Panc1 (cell line): ENCODE measurements at regions of chr6 and their contacts with region 1.

Region 1: GRCh38 chr6:17803409-17803808 is 96.7 kb upstream of the NUP153 start:
- DNase-seq: no peak
- ATAC-seq: no peak
- H3K4me3 ChIP-seq: no peak overlapping the region
- H3K27ac ChIP-seq: no peak overlapping the region
- H3K4me1 ChIP-seq: no peaks in the 10 kb centered on the region
- H3K27me3 ChIP-seq: no peaks in the 10 kb centered on the region
- CTCF ChIP-seq: no peak

Region 2: DNA sequence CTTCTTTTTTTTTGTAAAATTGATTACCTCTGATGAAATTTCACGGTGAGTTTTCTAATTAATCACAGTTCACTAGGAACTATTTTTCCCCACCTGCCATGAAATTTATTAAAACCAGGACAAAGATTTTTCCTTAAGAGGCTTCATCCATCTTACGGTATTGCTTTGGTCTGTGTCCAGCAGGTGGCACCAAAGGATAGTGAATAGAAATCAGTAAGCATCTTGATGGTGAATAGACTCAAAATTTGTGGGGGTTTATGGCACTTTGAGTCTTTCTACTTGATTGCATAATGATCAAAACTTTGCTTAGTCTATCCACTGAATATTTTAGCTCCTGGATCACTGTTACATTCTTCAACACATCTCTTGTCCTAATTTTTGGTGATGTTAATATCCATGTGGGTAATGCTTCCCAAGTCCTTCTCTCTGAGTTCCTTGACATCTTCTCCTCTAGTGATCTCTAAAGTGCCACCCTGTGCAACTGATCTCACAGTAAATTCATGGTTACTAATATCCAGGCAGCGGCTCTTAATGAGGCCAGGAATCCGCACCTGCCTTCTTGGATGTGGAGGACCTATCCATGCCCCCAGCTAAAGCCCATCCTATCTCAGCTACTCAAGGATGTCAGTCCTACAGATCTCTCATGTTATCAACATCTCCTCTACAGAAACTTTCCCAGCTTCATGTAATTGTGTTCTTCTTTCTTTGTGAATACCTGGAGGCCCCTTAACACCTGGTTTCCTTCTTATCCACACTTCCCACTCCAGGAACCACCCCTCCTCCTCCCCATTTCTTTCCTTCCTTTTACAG is 647.1 kb before region 1 on chr6:
- CTCF ChIA-PET with region 1: no interaction called
- POLR2A ChIA-PET with region 1: no interaction called
- in situ Hi-C with region 1: no loop called
- intact Hi-C with region 1: loop called (anchors 5 kb)
- DNase-seq: peak; percentile 69
- ATAC-seq: peak; percentile 89
- H3K4me3 ChIP-seq: no peak overlapping the region
- H3K27ac ChIP-seq: no peak overlapping the region
- H3K4me1 ChIP-seq: no peaks in the 10 kb centered on the region
- H3K27me3 ChIP-seq: no peaks in the 10 kb centered on the region
- CTCF ChIP-seq: peak; percentile 72; the same call in 1 of the 2 replicates

Region 3: DNA sequence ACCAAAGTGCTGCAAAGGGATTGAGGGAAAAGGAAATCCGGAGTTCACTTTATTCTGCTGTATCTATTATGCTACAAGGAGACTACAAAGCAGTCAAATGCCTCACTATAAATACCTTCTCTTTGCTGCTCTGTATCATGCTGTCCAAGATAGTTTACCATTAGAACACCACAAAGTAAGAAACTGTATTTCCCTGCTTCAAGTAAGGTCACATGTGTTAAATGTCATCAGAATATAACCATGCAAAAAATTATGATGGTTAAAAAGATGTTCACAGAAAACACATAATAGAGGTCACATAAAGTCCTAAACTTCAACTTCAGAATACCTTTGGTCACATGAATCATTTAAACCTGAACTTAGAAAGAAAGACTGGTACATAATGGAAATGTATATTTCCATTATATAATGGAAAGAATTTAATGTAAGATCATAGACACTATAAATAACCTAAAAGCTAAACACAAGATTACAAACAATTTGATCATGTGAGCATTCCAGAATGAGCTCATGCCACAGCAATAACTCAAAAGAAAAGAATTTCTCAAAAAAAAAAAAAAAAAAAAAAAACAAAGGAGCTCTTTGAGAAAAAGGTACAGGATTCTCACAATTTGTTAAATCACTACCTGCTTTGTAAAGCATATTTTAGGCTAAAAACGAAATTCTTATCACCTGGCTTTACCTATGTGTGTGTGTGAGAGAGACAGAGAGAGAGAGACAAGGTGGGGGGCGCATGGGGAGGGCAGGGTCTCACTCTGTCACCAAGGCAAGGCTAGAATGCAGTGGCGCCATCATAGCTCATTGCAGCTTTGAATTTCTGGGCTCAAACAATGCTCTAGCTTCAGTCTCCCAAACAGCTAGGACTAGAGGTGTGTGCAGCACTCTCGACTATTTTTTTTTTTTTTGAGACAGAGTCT is 125.4 kb after region 1 on chr6:
- CTCF ChIA-PET with region 1: no interaction called
- POLR2A ChIA-PET with region 1: no interaction called
- in situ Hi-C with region 1: no loop called
- intact Hi-C with region 1: no loop called
- DNase-seq: no peak
- ATAC-seq: no peak
- H3K4me3 ChIP-seq: no peak overlapping the region
- H3K27ac ChIP-seq: no peak overlapping the region
- H3K4me1 ChIP-seq: no peaks in the 10 kb centered on the region; the same call in 1 of the 2 replicates
- H3K27me3 ChIP-seq: no peaks in the 10 kb centered on the region
- CTCF ChIP-seq: no peak

Region 4: DNA sequence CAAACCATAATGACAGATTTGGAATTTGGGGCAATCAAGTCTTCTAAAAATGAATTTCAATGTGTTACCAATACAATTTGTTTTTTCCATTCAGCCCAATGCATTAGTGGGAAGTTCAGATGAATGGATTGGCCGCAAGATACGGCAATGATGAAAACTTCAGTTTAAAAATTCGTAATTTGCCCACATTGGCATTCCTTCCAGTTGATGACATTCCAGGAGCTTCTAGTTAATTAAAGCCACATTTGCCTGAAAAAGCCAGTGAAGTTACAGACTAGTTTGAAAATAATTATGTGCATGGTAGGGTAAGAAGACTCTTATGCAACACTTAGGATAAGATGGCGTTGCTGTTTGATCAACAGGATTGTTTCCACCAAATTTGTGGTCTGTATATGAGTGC is 272.8 kb after region 1 on chr6:
- CTCF ChIA-PET with region 1: no interaction called
- POLR2A ChIA-PET with region 1: no interaction called
- in situ Hi-C with region 1: no loop called
- intact Hi-C with region 1: no loop called
- DNase-seq: no peak
- ATAC-seq: no peak
- H3K4me3 ChIP-seq: no peak overlapping the region
- H3K27ac ChIP-seq: no peak overlapping the region
- H3K4me1 ChIP-seq: no peaks in the 10 kb centered on the region
- H3K27me3 ChIP-seq: no peaks in the 10 kb centered on the region
- CTCF ChIP-seq: no peak